ENCODE measurements at regions of chr16 and their contacts with region 1.

Region 1: DNA sequence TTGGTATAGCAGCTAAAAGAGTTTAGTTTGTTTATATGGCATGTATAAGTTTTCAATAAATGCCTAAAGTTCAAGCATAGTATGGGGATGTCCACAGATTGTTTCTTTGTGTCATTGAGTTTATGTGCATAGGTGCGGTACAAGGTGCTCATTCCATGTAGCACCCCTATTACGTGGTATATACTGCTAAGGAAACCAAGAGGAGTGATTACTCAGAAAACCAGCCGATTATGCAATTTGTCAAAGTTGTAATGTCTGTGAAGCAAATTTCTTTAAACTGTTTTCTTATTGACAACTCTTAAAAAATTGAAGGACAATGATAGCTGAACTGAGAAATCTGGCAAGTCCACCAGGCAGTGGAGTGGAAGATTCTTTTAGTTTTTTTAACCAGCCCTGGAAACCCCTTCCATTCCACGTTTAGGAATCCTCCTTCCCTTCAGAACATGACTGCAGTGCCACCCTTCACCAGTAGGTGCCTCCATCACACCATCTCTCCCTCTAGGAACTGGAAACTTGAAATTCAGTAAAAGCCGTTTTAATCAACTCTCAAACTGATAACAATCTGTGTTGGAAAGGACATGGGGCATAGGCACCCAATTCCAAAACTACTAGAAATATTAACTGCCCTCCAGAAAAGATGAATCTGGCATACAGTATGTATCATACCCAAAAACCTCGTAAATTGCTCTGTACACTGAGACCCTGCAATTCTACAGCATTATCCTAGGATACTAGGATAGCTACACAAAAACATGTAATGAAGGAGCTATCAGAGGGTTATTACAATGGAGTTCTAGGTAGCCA is 43.5 kb downstream of the REXO5 start:
- DNase-seq: peak; percentile 82
- H3K4me3 ChIP-seq: no peak overlapping the region
- H3K27ac ChIP-seq: no peak overlapping the region
- H3K4me1 ChIP-seq: no peaks in the 10 kb centered on the region
- H3K27me3 ChIP-seq: no peaks in the 10 kb centered on the region
- CTCF ChIP-seq: peak; percentile 96

Region 2: DNA sequence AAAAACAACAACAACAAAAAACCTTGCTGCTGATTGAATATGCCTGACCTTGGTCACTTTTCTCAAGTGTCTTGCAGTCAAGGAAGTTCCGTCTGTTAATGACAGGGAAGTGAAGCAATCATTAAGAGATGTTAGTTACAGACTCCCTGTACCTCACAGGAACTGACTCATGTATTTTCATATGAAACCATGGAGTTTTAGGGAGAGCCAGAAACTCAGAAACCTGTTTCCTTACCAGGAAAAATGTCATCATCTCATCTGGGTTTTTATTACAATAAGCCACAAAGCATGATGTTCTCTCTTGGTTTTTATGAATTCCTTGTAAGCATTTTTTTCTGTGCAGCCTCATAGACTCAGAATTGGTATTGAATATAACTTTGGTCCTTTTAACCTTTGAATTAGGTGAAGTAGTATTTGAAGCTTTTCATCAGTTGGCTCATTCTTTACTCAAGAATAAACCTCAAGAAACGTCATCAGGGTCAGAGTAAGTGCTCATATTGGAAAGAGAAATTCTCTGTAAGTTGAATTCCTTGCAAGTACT is 61.1 kb after region 1 on chr16:
- intact Hi-C with region 1: loop called (anchors 10 kb)
- DNase-seq: no peak
- H3K4me3 ChIP-seq: no peak overlapping the region
- H3K27ac ChIP-seq: peak overlapping the region; percentile 18
- H3K4me1 ChIP-seq: peaks cover 6% of the 10 kb centered on the region
- H3K27me3 ChIP-seq: no peaks in the 10 kb centered on the region
- CTCF ChIP-seq: no peak

Region 3: GRCh38 chr16:21001262-21001661 is 151.5 kb after region 1 on chr16:
- intact Hi-C with region 1: loop called (anchors 5 kb)
- DNase-seq: peak; percentile 32
- H3K4me3 ChIP-seq: no peak overlapping the region
- H3K27ac ChIP-seq: no peak overlapping the region
- H3K4me1 ChIP-seq: no peaks in the 10 kb centered on the region
- H3K27me3 ChIP-seq: no peaks in the 10 kb centered on the region
- CTCF ChIP-seq: peak; percentile 40

Region 4: DNA sequence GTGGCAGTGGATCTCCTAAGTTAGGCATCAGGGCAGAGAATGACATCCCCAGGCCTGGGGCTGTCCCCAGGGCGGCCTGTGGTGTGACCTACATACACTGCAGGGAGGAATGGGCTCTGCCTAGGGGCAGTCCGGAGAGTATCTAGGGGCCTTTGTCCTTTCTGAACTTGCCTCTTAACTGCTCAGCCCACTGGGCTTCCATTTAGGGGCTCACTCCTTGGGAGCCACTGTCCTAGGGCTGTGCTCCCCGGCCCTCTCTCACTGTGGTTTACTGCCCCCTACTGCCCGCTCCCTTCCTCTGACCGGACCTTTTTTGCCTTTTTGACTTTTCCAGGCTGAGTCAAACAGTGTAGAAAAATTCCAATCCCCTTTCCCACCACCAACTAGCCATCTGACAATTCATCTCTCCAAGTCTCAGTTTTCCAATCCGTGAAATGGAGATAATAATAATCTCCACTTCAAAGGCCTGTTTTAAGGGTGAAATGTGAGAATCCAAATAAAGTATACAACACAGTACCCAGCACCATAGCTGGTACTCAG is 234.0 kb after region 1 on chr16:
- intact Hi-C with region 1: loop called (anchors 2 kb)
- DNase-seq: peak; percentile 71
- H3K4me3 ChIP-seq: no peak overlapping the region
- H3K27ac ChIP-seq: no peak overlapping the region
- H3K4me1 ChIP-seq: no peaks in the 10 kb centered on the region
- H3K27me3 ChIP-seq: no peaks in the 10 kb centered on the region
- CTCF ChIP-seq: peak; percentile 57

Region 5: DNA sequence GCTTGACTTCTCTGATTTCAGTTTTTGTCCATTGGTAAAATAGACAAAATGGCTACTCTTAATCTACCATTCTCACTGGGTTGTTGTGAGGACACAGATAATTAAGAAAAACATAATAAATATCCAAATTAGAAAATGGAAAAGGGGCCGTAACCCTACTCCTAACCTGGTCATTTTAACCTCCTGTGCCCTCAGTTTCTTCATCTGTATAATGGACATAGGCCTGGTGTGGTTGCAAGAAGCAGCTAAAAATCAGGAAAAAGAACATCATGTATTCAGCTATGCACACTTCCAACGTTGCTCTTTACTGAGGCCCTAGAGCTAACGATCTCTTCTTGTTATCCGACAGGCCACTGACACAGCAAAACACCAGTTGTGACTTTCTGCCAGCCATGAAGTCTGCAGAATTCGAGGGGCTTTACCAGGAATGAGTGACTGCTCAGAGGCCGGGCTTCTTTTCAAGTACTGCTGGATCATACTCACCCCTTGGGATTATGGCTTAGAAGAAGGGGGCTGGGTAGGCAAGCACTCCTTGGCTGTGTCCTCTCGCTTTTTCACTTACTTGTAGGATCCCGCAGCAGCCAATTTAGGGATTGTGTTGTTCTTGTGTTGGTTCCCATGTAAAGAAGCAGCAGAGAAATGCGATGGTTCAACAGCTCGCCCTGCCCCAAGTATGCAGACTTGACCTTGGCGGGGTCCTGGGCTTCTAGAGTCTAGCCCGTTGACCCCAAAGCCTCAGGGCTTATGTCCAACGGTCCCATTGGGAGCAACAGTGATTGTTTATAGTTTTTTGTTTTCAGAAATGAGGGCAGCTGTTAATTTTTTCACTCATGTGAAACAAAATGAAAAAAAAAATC is 329.6 kb after region 1 on chr16:
- intact Hi-C with region 1: no loop called
- DNase-seq: no peak
- H3K4me3 ChIP-seq: no peak overlapping the region
- H3K27ac ChIP-seq: no peak overlapping the region
- H3K4me1 ChIP-seq: no peaks in the 10 kb centered on the region
- H3K27me3 ChIP-seq: no peaks in the 10 kb centered on the region
- CTCF ChIP-seq: no peak

Measured in colonic mucosa (tissue), 4 donors.